ENCODE measurements at regions of chr6 and their contacts with region 1.

Region 1: DNA sequence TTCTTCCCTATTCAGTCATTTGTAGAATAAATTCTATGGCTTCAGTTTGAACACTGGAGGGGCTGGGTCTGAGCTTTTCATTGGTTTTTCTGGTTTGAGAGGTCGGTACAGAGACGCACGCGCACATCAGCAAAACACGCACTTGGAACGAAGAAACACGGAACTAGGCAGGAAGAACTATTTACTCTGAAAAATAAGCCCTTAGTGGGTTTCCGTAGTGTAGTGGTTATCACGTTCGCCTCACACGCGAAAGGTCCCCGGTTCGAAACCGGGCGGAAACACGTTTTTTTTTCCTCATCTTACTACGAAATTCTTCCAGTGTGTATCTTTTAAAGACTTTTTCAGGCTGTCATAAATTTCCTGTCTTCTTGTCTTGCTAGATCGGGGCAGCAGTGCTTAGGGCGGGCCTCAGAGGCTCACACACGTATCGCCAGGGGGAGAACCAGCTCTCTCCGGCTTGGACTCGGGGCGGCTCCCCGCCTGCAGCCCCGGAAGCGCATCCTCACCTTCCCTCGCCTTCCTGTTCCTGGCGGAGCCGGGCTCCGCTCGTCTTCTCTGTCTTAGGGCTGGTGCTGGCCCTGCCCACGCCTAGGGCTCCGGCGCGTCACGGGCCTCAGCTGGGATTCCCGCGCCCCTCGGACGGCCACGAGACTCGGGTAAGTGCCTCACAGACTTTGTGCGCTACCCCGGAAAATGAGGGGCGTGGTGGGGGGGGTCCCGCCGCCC is at the start of gene HMGN4:
- DNase-seq: peak; percentile 81 to 87
- H3K4me3 ChIP-seq: peak within 1 kb of the TSS; percentile 75
- H3K4me1 ChIP-seq: peaks cover 15% of the 10 kb centered on the region
- H3K27me3 ChIP-seq: no peaks in the 10 kb centered on the region

Region 2: GRCh38 chr6:26327450-26328264 is 210.4 kb before region 1 on chr6:
- in situ Hi-C with region 1: loop called (anchors 5 kb)
- DNase-seq: peak; percentile 73 to 87
- H3K4me3 ChIP-seq: peak overlapping the region; percentile 45
- H3K4me1 ChIP-seq: peaks cover 15% of the 10 kb centered on the region
- H3K27me3 ChIP-seq: no peaks in the 10 kb centered on the region

Measured in HAP-1 (cell line).